Panc1 (cell line): ENCODE measurements at regions of chr16 and their contacts with region 1.

Region 1: DNA sequence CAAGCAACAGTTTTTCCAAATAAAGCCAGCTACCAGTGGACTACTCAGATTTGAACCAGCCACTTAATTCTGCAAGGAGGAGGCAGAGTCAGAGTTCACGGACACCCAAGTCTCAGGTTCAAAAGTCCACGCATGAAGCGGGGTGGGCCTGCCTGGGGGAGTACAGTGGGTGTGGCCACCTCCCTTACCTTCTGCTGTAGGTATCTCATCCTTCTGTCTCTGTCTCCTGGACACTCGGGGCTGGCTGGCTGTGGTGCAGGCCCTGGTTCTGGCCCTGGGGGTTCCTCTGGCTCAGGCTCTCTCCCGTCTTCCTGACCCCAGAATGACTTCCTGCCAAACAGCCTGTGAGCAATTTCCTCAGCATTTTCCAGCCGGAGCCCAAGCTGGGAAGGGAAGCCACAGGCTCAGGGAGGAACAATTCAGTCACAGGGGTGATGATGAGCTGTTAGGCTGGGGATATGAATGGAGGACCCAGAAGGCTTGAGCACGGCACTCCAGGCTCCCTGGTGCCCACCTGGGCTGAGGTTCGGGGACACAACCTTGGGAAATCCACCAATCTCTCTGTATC is 101.9 kb downstream of the LITAF start:
- DNase-seq: no peak
- ATAC-seq: no peak
- H3K4me3 ChIP-seq: no peak overlapping the region
- H3K27ac ChIP-seq: no peak overlapping the region
- H3K4me1 ChIP-seq: no peaks in the 10 kb centered on the region
- H3K27me3 ChIP-seq: no peaks in the 10 kb centered on the region
- CTCF ChIP-seq: no peak

Region 2: GRCh38 chr16:11066231-11066870 is 418.4 kb before region 1 on chr16:
- CTCF ChIA-PET with region 1: no interaction called
- POLR2A ChIA-PET with region 1: no interaction called
- in situ Hi-C with region 1: no loop called
- intact Hi-C with region 1: no loop called
- DNase-seq: no peak
- ATAC-seq: no peak
- H3K4me3 ChIP-seq: no peak overlapping the region
- H3K27ac ChIP-seq: no peak overlapping the region
- H3K4me1 ChIP-seq: no peaks in the 10 kb centered on the region
- H3K27me3 ChIP-seq: no peaks in the 10 kb centered on the region
- CTCF ChIP-seq: no peak

Region 3: DNA sequence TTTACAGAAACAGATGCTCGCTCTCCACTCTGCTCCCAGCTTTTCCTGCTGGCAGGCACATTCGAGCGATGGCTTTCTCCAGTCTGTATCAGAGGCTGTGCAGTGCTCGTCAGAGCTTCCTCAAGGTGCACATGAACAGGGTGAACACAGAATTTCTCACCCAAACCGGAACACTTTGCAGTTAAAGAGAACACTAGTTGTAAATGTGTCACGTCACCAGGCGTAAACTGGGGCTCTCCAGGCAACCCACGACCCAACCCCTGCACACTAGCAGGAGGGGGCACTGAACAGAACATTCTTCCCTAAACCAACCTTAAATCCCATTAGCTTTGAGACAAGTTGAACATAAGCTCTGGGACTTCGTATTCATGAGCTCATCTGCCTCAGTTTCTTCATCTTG is 20.5 kb before region 1 on chr16:
- CTCF ChIA-PET with region 1: no interaction called
- POLR2A ChIA-PET with region 1: interaction called, 13 read pairs
- in situ Hi-C with region 1: no loop called
- intact Hi-C with region 1: no loop called
- DNase-seq: no peak
- ATAC-seq: no peak
- H3K4me3 ChIP-seq: no peak overlapping the region
- H3K27ac ChIP-seq: no peak overlapping the region
- H3K4me1 ChIP-seq: no peaks in the 10 kb centered on the region
- H3K27me3 ChIP-seq: no peaks in the 10 kb centered on the region
- CTCF ChIP-seq: no peak

Region 4: GRCh38 chr16:11799509-11800381 is 315.0 kb after region 1 on chr16:
- CTCF ChIA-PET with region 1: no interaction called
- POLR2A ChIA-PET with region 1: no interaction called
- in situ Hi-C with region 1: no loop called
- intact Hi-C with region 1: no loop called
- DNase-seq: no peak
- ATAC-seq: no peak
- H3K4me3 ChIP-seq: no peak overlapping the region
- H3K27ac ChIP-seq: no peak overlapping the region
- H3K4me1 ChIP-seq: peaks cover 10% of the 10 kb centered on the region
- H3K27me3 ChIP-seq: no peaks in the 10 kb centered on the region
- CTCF ChIP-seq: no peak